GM12878 (cell line): ENCODE measurements at regions of chr5 and their contacts with region 1.

Region 1: GRCh38 chr5:78547731-78548615 is 100.6 kb downstream of the LHFPL2 start:
- DNase-seq: no peak
- ATAC-seq: no peak
- H3K4me3 ChIP-seq: no peak overlapping the region
- H3K27ac ChIP-seq: peak overlapping the region; percentile 41; the same call in 1 of the 2 replicates
- H3K4me1 ChIP-seq: peaks cover 59% of the 10 kb centered on the region
- H3K27me3 ChIP-seq: no peaks in the 10 kb centered on the region
- CTCF ChIP-seq: no peak
- EP300 ChIP-seq: no peak
- POLR2A ChIP-seq: 0 out of 2 replicates have a peak, but pooled peaks have one; percentile 2
- RAD21 ChIP-seq: no peak

Region 2: DNA sequence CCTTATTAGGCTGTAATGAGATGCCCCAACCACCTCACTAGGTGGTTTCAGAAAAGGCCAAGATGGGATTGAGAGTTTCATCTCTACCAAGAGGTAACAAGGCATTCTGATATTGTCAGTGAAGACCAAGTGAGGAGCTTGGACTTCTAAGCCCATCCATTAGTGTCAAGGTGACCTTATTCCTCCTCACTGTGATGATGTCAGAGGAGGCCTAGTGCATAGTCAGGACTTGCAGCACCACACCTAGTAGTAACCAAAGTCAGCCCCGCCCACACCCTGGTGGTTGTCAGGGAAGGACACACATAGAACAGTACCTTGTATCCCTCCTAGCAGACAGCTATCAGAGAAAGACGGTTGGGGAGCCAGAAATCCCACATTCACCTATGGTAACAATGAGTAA is 365.2 kb before region 1 on chr5:
- CTCF ChIA-PET with region 1: no interaction called
- POLR2A ChIA-PET with region 1: no interaction called
- RAD21 ChIA-PET with region 1: no interaction called
- SMC1A ChIA-PET with region 1: no interaction called
- in situ Hi-C with region 1: no loop called
- intact Hi-C with region 1: no loop called
- DNase-seq: no peak
- ATAC-seq: no peak
- H3K4me3 ChIP-seq: no peak overlapping the region
- H3K27ac ChIP-seq: no peak overlapping the region
- H3K4me1 ChIP-seq: no peaks in the 10 kb centered on the region
- H3K27me3 ChIP-seq: no peaks in the 10 kb centered on the region
- CTCF ChIP-seq: no peak
- EP300 ChIP-seq: no peak
- POLR2A ChIP-seq: no peak
- RAD21 ChIP-seq: no peak

Region 3: DNA sequence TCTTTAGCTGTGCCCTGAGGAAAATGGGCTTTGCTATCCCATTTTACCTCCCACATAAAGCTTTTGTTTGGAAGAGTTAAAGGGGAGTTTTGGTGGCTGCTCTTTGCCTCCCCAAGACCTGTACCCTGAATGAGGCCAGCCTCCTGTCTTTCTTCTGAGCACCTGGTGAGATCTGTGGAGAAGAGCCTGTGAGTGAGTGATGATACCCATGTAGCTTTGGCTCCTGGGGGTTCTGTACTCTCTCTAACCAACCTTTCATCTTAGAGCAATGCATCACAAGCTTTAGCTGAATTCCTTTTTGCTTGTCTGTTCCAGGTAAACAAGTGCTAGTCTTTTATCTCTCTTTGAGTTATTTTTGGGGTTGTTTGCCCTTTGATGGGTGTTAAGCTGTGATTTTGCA is 114.0 kb before region 1 on chr5:
- CTCF ChIA-PET with region 1: no interaction called
- POLR2A ChIA-PET with region 1: no interaction called
- RAD21 ChIA-PET with region 1: no interaction called
- SMC1A ChIA-PET with region 1: no interaction called
- in situ Hi-C with region 1: no loop called
- intact Hi-C with region 1: no loop called
- DNase-seq: no peak
- ATAC-seq: no peak
- H3K4me3 ChIP-seq: no peak overlapping the region
- H3K27ac ChIP-seq: no peak overlapping the region
- H3K4me1 ChIP-seq: no peaks in the 10 kb centered on the region
- H3K27me3 ChIP-seq: no peaks in the 10 kb centered on the region
- CTCF ChIP-seq: no peak
- EP300 ChIP-seq: no peak
- POLR2A ChIP-seq: no peak
- RAD21 ChIP-seq: no peak

Region 4: DNA sequence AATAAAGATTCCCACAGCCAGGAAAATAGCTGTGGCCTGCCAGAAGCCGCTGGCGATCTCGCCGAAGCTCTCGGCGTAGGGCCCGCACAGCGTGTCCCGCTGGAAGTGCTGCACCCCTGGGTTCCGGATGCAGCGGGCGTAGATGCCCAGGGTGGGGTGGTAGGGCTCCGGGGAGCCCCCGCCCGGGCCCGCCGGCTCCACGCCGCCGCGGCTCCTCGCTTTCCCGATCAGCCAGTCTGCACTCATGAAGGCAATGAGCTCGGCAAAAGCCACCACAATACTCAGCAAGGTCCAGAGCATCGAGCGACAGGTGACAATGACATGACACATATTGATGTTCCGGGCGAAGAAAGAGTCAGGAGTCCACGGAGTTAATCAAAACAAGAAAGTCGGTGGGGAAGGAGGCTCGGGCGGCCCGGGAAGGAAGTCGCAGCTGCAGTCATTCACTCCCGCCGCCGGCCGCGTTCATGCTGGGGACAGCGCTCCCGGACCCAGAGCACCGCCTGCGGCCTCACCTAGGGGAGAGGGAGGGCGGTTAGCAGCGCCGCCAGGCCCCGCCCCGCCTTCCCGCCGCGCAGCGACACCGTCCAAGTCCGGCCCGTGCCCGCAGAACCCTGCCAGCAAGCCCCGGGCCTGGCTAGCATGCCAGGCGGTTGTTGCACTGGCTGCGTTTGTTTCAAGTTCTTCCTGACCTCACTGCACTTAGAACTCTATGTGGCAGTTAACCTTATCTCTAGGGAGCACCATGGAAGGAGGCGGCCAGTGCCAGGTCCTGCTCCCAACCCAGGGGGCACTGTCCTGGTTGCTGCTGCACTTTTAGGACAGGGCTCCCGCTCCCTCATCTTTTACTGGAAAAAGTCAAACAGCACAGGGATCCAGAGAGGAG is 37.8 kb before region 1 on chr5:
- CTCF ChIA-PET with region 1: no interaction called
- POLR2A ChIA-PET with region 1: no interaction called
- RAD21 ChIA-PET with region 1: no interaction called
- SMC1A ChIA-PET with region 1: no interaction called
- in situ Hi-C with region 1: no loop called
- intact Hi-C with region 1: no loop called
- DNase-seq: no peak
- ATAC-seq: peak; percentile 90
- H3K4me3 ChIP-seq: peak overlapping the region; percentile 31; the same call in 1 of the 2 replicates
- H3K27ac ChIP-seq: no peak overlapping the region
- H3K4me1 ChIP-seq: peaks cover 9% of the 10 kb centered on the region
- H3K27me3 ChIP-seq: no peaks in the 10 kb centered on the region
- CTCF ChIP-seq: no peak
- EP300 ChIP-seq: no peak
- POLR2A ChIP-seq: no peak
- RAD21 ChIP-seq: no peak

Region 5: GRCh38 chr5:78537821-78538220 is 10.2 kb before region 1 on chr5:
- CTCF ChIA-PET with region 1: interaction called, 7 read pairs
- POLR2A ChIA-PET with region 1: no interaction called
- RAD21 ChIA-PET with region 1: interaction called, 7 read pairs
- SMC1A ChIA-PET with region 1: interaction called, 22 read pairs
- in situ Hi-C with region 1: no loop called
- intact Hi-C with region 1: no loop called
- DNase-seq: no peak
- ATAC-seq: peak; percentile 84
- H3K4me3 ChIP-seq: no peak overlapping the region
- H3K27ac ChIP-seq: no peak overlapping the region
- H3K4me1 ChIP-seq: peaks cover 5% of the 10 kb centered on the region
- H3K27me3 ChIP-seq: no peaks in the 10 kb centered on the region
- CTCF ChIP-seq: peak; percentile 42 to 73 (median 57)
- EP300 ChIP-seq: no peak
- POLR2A ChIP-seq: no peak
- RAD21 ChIP-seq: peak; percentile 83

Region 6: GRCh38 chr5:78569448-78569847 is 21.5 kb after region 1 on chr5:
- CTCF ChIA-PET with region 1: interaction called, 8 read pairs
- POLR2A ChIA-PET with region 1: interaction called, 4 read pairs
- RAD21 ChIA-PET with region 1: interaction called, 22 read pairs
- SMC1A ChIA-PET with region 1: interaction called, 37 read pairs
- in situ Hi-C with region 1: no loop called
- intact Hi-C with region 1: no loop called
- DNase-seq: no peak
- ATAC-seq: no peak
- H3K4me3 ChIP-seq: no peak overlapping the region
- H3K27ac ChIP-seq: no peak overlapping the region
- H3K4me1 ChIP-seq: peaks cover 32% of the 10 kb centered on the region
- H3K27me3 ChIP-seq: no peaks in the 10 kb centered on the region
- CTCF ChIP-seq: no peak
- EP300 ChIP-seq: no peak
- POLR2A ChIP-seq: no peak
- RAD21 ChIP-seq: no peak

Region 7: DNA sequence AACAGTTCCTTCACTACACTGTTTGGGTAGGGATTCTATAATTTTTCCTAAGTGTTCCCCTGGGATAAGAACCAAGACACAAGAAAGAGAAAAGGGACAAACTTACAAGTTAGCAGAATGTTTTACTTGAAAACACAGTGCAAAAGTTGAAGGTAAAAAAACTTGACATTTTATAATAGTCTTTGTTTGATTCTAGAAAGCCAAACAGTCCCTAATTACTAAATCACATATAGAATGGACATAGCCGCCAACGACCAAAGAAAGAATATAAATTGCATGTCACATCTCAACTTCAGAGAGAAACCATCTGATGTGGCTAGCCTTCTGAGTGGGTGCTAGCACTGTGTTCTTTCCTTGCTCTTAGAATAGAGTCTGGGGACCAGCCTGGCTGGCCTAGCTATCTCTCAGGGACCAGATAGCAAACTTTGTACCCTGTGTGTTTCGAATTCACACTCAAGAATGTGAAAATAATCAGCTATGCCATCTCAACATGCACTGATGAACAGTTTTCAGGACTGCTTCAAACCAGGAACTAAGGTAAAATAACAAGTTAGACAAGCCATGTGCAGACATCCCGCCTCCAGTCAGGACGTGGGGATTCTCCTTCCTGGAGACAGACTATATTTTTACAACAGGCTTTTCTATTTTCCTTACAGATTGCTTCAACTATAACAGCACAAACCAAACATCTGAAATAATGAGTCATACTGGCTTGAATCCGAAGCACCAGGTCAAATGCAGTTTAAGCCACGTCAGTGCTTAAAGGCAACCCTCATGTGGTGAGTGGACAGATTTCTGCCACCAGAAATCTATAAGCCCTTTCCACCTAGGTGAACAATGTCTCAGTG is 46.9 kb after region 1 on chr5:
- CTCF ChIA-PET with region 1: interaction called, 3 read pairs
- POLR2A ChIA-PET with region 1: no interaction called
- RAD21 ChIA-PET with region 1: interaction called, 15 read pairs
- SMC1A ChIA-PET with region 1: interaction called, 20 read pairs
- in situ Hi-C with region 1: no loop called
- intact Hi-C with region 1: loop called (anchors 5 kb)
- DNase-seq: no peak
- ATAC-seq: peak; percentile 44
- H3K4me3 ChIP-seq: no peak overlapping the region
- H3K27ac ChIP-seq: no peak overlapping the region; the same call in 1 of the 2 replicates
- H3K4me1 ChIP-seq: peaks cover 26% of the 10 kb centered on the region
- H3K27me3 ChIP-seq: no peaks in the 10 kb centered on the region
- CTCF ChIP-seq: no peak
- EP300 ChIP-seq: no peak
- POLR2A ChIP-seq: no peak
- RAD21 ChIP-seq: no peak

Region 8: GRCh38 chr5:78638423-78638822 is 90.5 kb after region 1 on chr5:
- CTCF ChIA-PET with region 1: interaction called, 3 read pairs
- POLR2A ChIA-PET with region 1: no interaction called
- RAD21 ChIA-PET with region 1: interaction called, 5 read pairs
- SMC1A ChIA-PET with region 1: interaction called, 4 read pairs
- in situ Hi-C with region 1: no loop called
- intact Hi-C with region 1: loop called (anchors 5 kb)
- DNase-seq: no peak
- ATAC-seq: no peak
- H3K4me3 ChIP-seq: no peak overlapping the region
- H3K27ac ChIP-seq: no peak overlapping the region
- H3K4me1 ChIP-seq: peaks cover 24% of the 10 kb centered on the region
- H3K27me3 ChIP-seq: no peaks in the 10 kb centered on the region
- CTCF ChIP-seq: no peak
- EP300 ChIP-seq: no peak
- POLR2A ChIP-seq: no peak
- RAD21 ChIP-seq: no peak

Region 9: DNA sequence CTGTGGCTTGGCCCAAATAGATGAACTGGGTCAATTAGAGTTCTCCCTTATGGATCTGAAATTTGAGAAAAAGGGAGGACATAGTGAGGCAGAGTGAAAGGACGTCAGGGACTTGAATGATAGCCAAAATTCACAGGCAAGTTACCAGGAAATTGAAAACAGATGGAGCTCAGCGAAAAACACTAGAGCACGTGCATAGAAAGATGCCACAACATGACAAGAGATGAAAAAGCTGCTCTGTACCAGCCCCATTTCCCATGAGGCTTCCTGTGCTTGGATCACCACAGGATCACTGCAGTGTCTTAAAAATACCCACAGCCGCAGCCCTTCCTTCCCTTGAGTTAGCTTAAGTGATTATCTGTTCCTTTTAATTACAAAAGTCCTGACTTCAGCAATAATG is 1005.0 kb after region 1 on chr5:
- CTCF ChIA-PET with region 1: no interaction called
- POLR2A ChIA-PET with region 1: no interaction called
- RAD21 ChIA-PET with region 1: no interaction called
- SMC1A ChIA-PET with region 1: no interaction called
- in situ Hi-C with region 1: no loop called
- intact Hi-C with region 1: no loop called
- DNase-seq: no peak
- ATAC-seq: no peak
- H3K4me3 ChIP-seq: no peak overlapping the region
- H3K27ac ChIP-seq: no peak overlapping the region
- H3K4me1 ChIP-seq: no peaks in the 10 kb centered on the region
- H3K27me3 ChIP-seq: no peaks in the 10 kb centered on the region
- CTCF ChIP-seq: no peak
- EP300 ChIP-seq: no peak
- POLR2A ChIP-seq: no peak
- RAD21 ChIP-seq: no peak